K562 (cell line): ENCODE measurements at regions of chr9 and their contacts with region 1.

Region 1: GRCh38 chr9:87950765-87951488 is 23.4 kb downstream of the CDK20 start:
- DNase-seq: peak; percentile 18 to 55 (median 26)
- ATAC-seq: peak; percentile 73
- H3K4me3 ChIP-seq: no peak overlapping the region
- H3K27ac ChIP-seq: no peak overlapping the region
- H3K4me1 ChIP-seq: no peaks in the 10 kb centered on the region
- H3K27me3 ChIP-seq: no peaks in the 10 kb centered on the region; a peak in 1 of 5 replicates
- CTCF ChIP-seq: peak; percentile 52 to 69 (median 57); a peak in 4 of 6 replicates
- EP300 ChIP-seq: no peak
- POLR2A ChIP-seq: no peak
- RAD21 ChIP-seq: peak; percentile 65 to 80

Region 2: DNA sequence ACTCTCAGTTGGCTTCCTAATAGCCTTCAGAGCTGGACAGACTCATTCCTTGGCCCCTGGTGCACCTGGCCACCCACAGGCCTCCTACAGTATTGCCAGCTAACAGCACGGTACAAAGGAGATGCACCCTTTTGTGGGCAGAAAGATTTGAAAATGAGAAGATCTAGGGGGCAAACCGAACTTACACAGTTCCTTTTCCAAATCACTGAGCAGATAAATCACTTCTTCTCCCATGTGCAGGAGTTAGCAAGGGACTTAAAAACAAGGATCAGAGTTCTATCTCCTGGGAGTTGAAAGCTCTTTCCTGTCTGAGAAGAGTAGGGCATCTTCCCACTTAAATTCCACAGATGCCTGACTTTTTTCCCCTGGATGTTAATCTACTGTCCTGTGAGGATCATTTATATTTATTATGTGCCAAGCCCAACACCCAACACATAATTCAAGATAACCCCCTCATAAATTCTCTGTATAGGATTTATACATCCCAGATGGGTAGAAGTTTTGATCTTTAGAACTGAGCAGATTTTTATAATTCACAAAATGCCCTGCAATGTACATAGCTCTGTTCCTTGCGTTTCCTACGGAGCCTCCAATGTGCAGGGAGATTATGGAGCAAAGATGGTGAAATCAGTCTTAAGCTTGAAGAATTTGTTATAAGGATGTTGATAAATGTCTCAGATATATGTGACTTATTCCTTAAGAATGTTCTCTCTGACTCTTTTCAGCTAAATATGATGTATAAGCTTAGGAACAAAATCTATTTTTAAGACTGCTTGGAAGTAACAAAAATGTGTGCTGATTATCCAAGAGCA is 660.5 kb before region 1 on chr9:
- CTCF ChIA-PET with region 1: no interaction called
- POLR2A ChIA-PET with region 1: no interaction called
- in situ Hi-C with region 1: no loop called
- intact Hi-C with region 1: no loop called
- DNase-seq: no peak
- ATAC-seq: peak; percentile 37; the same call in 1 of the 3 replicates
- H3K4me3 ChIP-seq: no peak overlapping the region
- H3K27ac ChIP-seq: no peak overlapping the region
- H3K4me1 ChIP-seq: no peaks in the 10 kb centered on the region
- H3K27me3 ChIP-seq: peaks cover 0 to 3% of the 10 kb centered on the region in 2 experiments; a peak in 1 of 5 replicates
- CTCF ChIP-seq: no peak
- EP300 ChIP-seq: no peak
- POLR2A ChIP-seq: no peak
- RAD21 ChIP-seq: no peak

Region 3: DNA sequence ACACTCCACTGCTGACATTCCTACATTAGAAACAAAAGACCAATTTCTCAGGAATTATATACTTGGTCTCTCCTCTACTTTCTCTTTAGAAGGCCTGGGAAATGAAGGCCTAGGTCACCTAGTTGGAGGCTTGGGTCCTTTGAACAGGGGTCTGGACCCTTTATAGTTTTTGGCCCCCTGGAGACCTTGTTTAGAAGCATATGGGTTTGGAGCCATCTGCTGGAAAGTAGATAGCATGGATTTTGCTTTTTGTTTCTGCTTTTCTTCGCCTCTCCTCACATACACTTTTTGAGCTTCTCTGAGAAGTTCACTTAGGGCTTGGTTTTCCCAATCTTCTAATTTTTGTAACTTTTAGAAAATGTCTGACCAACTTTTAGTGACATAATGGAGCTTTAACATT is 90.5 kb after region 1 on chr9:
- CTCF ChIA-PET with region 1: interaction called, 7 read pairs
- POLR2A ChIA-PET with region 1: no interaction called
- in situ Hi-C with region 1: no loop called
- intact Hi-C with region 1: loop called (anchors 1 kb)
- DNase-seq: no peak
- ATAC-seq: no peak
- H3K4me3 ChIP-seq: no peak overlapping the region
- H3K27ac ChIP-seq: no peak overlapping the region
- H3K4me1 ChIP-seq: no peaks in the 10 kb centered on the region
- H3K27me3 ChIP-seq: no peaks in the 10 kb centered on the region
- CTCF ChIP-seq: peak; percentile 30 to 37 (median 35); a peak in 2 of 6 replicates
- EP300 ChIP-seq: no peak
- POLR2A ChIP-seq: no peak
- RAD21 ChIP-seq: peak in 1 of 2 experiments; percentile 56; a peak in 3 of 4 replicates

Region 4: DNA sequence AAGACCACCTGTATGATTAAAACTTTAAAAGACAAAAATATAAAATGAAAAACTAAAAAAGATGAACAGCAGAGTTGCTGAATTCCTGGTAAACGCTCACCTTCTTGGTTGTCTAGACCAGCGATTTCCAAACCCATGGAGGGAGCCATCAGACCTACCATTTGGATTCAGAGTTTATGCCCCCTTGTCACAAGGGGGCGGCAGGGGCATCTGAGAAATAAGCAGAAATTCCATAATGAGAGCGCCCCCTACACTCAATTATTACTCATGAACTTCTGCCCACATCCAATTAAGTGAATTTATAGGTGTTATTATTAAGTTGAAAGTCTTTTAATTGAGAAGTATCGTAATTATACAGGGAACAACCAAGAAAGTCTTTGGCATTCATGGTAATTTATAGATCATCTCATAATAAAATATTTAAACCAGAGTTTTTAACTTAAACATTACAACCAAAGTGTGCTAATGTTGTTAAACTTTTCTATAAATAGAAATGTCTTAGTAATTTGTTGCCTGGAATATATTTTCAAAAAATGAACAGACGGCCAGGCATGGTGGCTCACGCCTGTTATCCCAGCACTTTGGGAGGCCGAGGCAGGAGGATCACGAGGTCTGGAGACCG is 222.6 kb after region 1 on chr9:
- CTCF ChIA-PET with region 1: no interaction called
- POLR2A ChIA-PET with region 1: no interaction called
- in situ Hi-C with region 1: no loop called
- intact Hi-C with region 1: loop called (anchors 5 kb)
- DNase-seq: peak; percentile 36 to 76 (median 42)
- ATAC-seq: peak; percentile 84
- H3K4me3 ChIP-seq: no peak overlapping the region
- H3K27ac ChIP-seq: no peak overlapping the region
- H3K4me1 ChIP-seq: no peaks in the 10 kb centered on the region
- H3K27me3 ChIP-seq: no peaks in the 10 kb centered on the region; a peak in 1 of 5 replicates
- CTCF ChIP-seq: peak; percentile 81 to 100 (median 99)
- EP300 ChIP-seq: no peak
- POLR2A ChIP-seq: no peak
- RAD21 ChIP-seq: peak; percentile 59 to 75

Region 5: DNA sequence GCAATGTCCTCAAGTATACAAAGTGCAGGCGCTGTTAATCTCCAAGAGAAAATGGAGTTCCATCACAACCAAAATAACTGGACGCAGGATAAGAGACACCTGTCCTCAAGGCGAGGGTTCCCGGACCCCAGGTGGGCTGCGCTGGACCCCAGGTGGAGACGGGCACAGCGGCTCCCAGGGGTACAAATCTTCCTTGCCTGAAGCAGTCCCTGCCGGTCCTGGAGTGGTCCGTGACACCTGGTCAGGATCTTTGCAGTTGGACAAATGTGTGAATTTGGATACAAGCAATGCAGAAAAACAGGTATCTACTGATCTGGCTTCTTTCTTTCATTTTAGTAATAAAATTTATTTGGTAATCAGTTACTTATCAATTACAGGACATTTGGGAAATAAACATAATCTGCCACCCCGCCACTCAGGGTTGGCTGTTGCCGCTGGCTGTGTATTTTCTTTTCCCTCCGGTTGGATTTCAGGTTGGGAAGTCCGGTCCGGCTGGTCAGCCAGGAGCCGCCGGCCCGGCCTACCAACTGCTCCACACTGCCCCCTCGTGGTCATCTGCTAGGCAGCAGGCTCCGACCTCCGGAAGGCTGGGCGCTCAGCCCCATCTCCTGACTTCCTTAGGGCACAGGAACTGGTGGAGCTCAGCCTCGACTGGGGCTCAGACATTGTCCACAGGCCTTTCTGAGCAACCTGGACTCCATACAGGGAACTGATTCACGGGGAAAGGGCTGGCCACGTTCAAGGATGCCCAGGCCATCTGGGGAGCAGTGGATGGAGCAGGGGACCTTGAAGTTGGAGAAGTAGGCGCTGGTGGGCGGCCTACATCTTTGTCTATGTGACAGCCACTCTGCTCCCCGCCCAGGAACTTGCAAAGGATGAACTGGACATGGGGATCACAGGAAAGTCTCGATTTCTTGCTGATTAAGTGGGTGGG is 627.5 kb after region 1 on chr9:
- CTCF ChIA-PET with region 1: interaction called, 3 read pairs
- POLR2A ChIA-PET with region 1: no interaction called
- in situ Hi-C with region 1: loop called (anchors 25 kb)
- intact Hi-C with region 1: loop called (anchors 5 kb)
- DNase-seq: peak; percentile 67 to 79 (median 76)
- ATAC-seq: peak; percentile 94
- H3K4me3 ChIP-seq: no peak overlapping the region
- H3K27ac ChIP-seq: no peak overlapping the region
- H3K4me1 ChIP-seq: peaks cover 0 to 7% of the 10 kb centered on the region in 2 experiments; a peak in 1 of 5 replicates
- H3K27me3 ChIP-seq: peaks cover 0 to 23% of the 10 kb centered on the region in 2 experiments; a peak in 4 of 5 replicates
- CTCF ChIP-seq: peak; percentile 70 to 95 (median 86)
- EP300 ChIP-seq: no peak
- POLR2A ChIP-seq: no peak
- RAD21 ChIP-seq: peak; percentile 72 to 82

Region 6: DNA sequence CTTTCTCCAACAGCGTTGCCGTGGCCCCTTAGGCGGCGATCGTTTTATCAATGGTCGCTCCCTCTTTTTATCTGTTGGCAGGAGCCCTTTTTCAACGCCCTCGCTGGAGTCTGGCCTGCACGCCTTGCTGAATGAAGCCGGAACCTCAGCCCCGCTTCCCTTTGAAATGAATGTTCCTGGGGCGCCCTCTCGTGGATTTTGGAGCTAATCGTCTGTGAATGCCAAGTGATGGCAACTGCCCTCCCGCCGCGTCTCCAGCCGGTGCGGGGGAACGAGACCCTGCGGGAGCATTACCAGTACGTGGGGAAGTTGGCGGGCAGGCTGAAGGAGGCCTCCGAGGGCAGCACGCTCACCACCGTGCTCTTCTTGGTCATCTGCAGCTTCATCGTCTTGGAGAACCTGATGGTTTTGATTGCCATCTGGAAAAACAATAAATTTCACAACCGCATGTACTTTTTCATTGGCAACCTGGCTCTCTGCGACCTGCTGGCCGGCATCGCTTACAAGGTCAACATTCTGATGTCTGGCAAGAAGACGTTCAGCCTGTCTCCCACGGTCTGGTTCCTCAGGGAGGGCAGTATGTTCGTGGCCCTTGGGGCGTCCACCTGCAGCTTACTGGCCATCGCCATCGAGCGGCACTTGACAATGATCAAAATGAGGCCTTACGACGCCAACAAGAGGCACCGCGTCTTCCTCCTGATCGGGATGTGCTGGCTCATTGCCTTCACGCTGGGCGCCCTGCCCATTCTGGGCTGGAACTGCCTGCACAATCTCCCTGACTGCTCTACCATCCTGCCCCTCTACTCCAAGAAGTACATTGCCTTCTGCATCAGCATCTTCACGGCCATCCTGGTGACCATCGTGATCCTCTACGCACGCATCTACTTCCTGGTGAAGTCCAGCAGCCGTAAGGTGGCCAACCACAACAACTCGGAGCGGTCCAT is 1050.3 kb after region 1 on chr9:
- CTCF ChIA-PET with region 1: no interaction called
- POLR2A ChIA-PET with region 1: no interaction called
- in situ Hi-C with region 1: loop called (anchors 25 kb)
- intact Hi-C with region 1: no loop called
- DNase-seq: peak; percentile 30 to 83 (median 49)
- ATAC-seq: peak; percentile 94
- H3K4me3 ChIP-seq: no peak overlapping the region
- H3K27ac ChIP-seq: no peak overlapping the region
- H3K4me1 ChIP-seq: peaks cover 3 to 9% of the 10 kb centered on the region in 2 experiments; a peak in 3 of 5 replicates
- H3K27me3 ChIP-seq: peaks cover 0 to 14% of the 10 kb centered on the region in 2 experiments; a peak in 2 of 5 replicates
- CTCF ChIP-seq: peak; percentile 65 to 83 (median 74)
- EP300 ChIP-seq: no peak
- POLR2A ChIP-seq: no peak
- RAD21 ChIP-seq: peak; percentile 78 to 83